Adrenal gland (tissue), 19 donors: ENCODE measurements at regions of chr2 and their contacts with region 1.

Region 1: GRCh38 chr2:237315170-237315828 is 98.7 kb downstream of the COL6A3 start:
- DNase-seq: peak; percentile 77 to 97 (median 86)
- H3K4me3 ChIP-seq: no peak overlapping the region
- H3K27ac ChIP-seq: peak overlapping the region in 4 of 5 donors; percentile 30 to 81 (median 64)
- H3K4me1 ChIP-seq: peaks cover 12 to 15% of the 10 kb centered on the region in 2 donors
- H3K27me3 ChIP-seq: no peaks in the 10 kb centered on the region
- CTCF ChIP-seq: peak in 4 of 6 experiments; percentile 13 to 54 (median 37)
- POLR2A ChIP-seq: no peak

Region 2: DNA sequence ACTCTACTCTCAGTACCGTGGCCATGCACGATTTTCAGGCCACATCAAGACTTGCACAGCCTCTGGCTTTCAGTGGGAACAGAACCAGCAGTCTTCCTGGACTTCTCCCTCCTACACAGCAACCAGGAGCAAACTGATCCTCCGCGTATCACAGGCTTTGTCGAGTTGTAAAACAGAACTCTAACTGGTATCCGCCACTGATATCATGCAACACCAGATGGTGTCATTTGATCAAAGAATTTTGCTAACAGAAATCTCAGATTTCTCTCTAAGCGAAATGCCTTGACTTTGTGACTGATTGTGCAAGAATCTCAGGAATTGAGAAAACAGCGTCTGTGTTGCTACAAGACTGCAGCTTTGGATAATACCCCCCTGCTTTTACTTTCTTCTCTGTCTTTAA is 143.9 kb before region 1 on chr2:
- intact Hi-C with region 1: loop called in 1 of 2 experiments (anchors 10 kb)
- DNase-seq: peak in 6 of 7 donors; percentile 27 to 65 (median 48)
- H3K4me3 ChIP-seq: no peak overlapping the region
- H3K27ac ChIP-seq: peak overlapping the region in 3 of 5 donors; percentile 22 to 53 (median 50)
- H3K4me1 ChIP-seq: no peaks in the 10 kb centered on the region
- H3K27me3 ChIP-seq: no peaks in the 10 kb centered on the region
- CTCF ChIP-seq: peak in 5 of 6 experiments; percentile 27 to 64 (median 45)
- POLR2A ChIP-seq: no peak

Region 3: GRCh38 chr2:237181844-237182243 is 133.5 kb before region 1 on chr2:
- intact Hi-C with region 1: loop called (anchors 10 kb)
- DNase-seq: peak in 2 of 7 donors; percentile 31 to 35
- H3K4me3 ChIP-seq: no peak overlapping the region
- H3K27ac ChIP-seq: peak overlapping the region in 1 of 5 donors; percentile 11
- H3K4me1 ChIP-seq: no peaks in the 10 kb centered on the region
- H3K27me3 ChIP-seq: no peaks in the 10 kb centered on the region
- CTCF ChIP-seq: no peak
- POLR2A ChIP-seq: no peak

Region 4: DNA sequence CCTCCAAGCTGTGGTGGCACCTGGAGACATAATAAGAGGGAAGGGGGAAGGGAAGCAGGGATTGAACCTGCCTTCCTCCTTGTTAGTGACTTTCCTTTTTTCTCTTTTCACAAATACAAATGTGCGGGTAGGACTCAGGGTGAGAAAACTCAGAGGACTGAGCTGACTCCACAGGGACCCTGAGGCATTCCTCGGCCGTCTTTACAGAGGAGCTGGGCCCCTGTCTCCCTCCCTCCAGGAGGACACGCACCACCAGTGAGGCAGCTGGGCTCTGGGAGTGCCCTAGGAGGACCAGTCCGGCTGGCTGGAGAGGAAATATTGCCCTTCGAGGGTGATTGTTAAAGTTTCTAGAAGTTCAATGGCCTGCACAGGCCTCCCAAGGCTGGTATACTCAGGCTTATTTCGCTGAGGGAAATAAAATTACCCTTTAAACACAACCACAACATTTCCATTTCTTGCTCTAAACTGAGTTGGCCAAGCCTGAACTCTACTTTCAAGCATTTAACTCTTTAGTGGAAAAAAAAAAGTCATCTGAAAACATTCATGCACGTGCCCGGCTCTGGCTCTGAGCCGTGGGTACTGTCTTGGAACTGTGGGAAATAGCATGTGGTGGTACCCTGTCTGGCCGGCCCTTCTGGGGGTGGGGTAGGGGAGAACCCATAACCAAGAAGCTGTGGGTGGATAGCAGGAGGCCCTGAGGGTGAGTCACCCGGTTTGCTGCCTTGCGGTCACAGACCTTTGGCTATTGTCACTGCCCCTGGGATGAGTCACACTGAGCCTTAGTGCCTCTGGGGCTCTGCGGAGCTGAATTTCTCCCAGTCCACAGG is 113.6 kb before region 1 on chr2:
- intact Hi-C with region 1: loop called in 1 of 2 experiments (anchors 10 kb)
- DNase-seq: peak; percentile 83 to 94 (median 90)
- H3K4me3 ChIP-seq: no peak overlapping the region
- H3K27ac ChIP-seq: peak overlapping the region; percentile 2 to 85 (median 45)
- H3K4me1 ChIP-seq: peaks cover 16% of the 10 kb centered on the region in 2 donors
- H3K27me3 ChIP-seq: no peaks in the 10 kb centered on the region
- CTCF ChIP-seq: no peak
- POLR2A ChIP-seq: peak in 1 of 2 donors; percentile 22